ENCODE measurements at regions of chr17 and their contacts with region 1.

Region 1: GRCh38 chr17:50169121-50169764 is 3.4 kb downstream of the SGCA start:
- DNase-seq: peak; percentile 59 to 85
- ATAC-seq: peak; percentile 49 to 77
- H3K4me3 ChIP-seq: no peak overlapping the region
- H3K27ac ChIP-seq: peak overlapping the region; percentile 41 to 55; a peak in 5 of 6 replicates
- H3K4me1 ChIP-seq: peaks cover 25% of the 10 kb centered on the region
- CTCF ChIP-seq: peak; percentile 97
- EP300 ChIP-seq: no peak
- POLR2A ChIP-seq: no peak
- RAD21 ChIP-seq: peak; percentile 98 to 99

Region 2: GRCh38 chr17:49987681-49988441 is 181.4 kb before region 1 on chr17:
- CTCF ChIA-PET with region 1: no interaction called
- POLR2A ChIA-PET with region 1: no interaction called
- DNase-seq: peak in 1 of 2 experiments; percentile 59
- ATAC-seq: peak; percentile 52 to 81; a peak in 5 of 6 replicates
- H3K4me3 ChIP-seq: no peak overlapping the region
- H3K27ac ChIP-seq: peak overlapping the region in 1 of 2 experiments; percentile 41; a peak in 2 of 6 replicates
- H3K4me1 ChIP-seq: peaks cover 12% of the 10 kb centered on the region
- CTCF ChIP-seq: no peak
- EP300 ChIP-seq: no peak
- POLR2A ChIP-seq: no peak
- RAD21 ChIP-seq: no peak

Region 3: DNA sequence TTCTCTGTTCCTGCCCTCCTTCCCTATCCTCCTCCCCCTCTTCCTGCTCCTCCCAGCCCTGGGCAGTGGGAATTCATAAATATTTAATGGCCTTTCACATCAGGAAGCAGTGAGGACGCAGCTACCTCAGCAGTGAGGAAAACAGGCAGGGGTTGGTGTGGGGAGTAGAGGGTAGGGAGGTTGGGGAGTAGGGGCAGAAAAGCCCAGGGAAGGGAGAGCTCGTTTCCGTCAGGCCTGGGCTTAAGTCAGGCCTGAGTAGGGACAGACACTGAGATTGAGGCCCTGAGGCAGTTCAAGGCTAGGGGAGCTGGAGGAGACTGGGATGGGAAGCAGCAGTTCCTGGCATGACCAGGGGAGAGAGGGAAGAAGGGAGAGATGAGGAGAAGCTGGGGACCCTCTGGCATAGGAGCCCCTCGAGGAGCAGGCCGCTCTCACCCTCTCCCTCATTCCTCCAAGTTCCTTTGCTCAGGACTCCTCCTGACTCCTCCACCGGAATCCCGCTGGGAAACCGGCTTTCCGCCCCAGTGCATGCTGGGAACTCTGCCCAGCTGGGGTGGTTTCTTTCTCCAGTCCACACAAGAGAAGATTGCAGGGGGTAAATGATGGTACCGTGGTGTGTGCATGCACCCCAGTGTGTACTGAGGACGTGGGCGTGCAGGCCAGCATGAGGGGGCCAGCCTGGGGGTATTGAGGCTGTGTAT is 45.4 kb before region 1 on chr17:
- CTCF ChIA-PET with region 1: interaction called, 18 read pairs
- POLR2A ChIA-PET with region 1: no interaction called
- DNase-seq: no peak
- ATAC-seq: peak in 1 of 2 experiments; percentile 27; a peak in 3 of 6 replicates
- H3K4me3 ChIP-seq: no peak overlapping the region
- H3K27ac ChIP-seq: peak overlapping the region in 1 of 2 experiments; percentile 17; a peak in 1 of 6 replicates
- H3K4me1 ChIP-seq: peaks cover 10% of the 10 kb centered on the region; the same call in 1 of the 3 replicates
- CTCF ChIP-seq: no peak
- EP300 ChIP-seq: no peak
- POLR2A ChIP-seq: no peak
- RAD21 ChIP-seq: no peak

Region 4: GRCh38 chr17:50213026-50214022 is 44.1 kb after region 1 on chr17:
- CTCF ChIA-PET with region 1: interaction called, 14 read pairs
- POLR2A ChIA-PET with region 1: no interaction called
- DNase-seq: peak in 1 of 2 experiments; percentile 37
- ATAC-seq: peak; percentile 15 to 49; a peak in 3 of 6 replicates
- H3K4me3 ChIP-seq: no peak overlapping the region
- H3K27ac ChIP-seq: peak overlapping the region in 1 of 2 experiments; percentile 22; a peak in 1 of 6 replicates
- H3K4me1 ChIP-seq: peaks cover 39% of the 10 kb centered on the region
- CTCF ChIP-seq: peak; percentile 14; the same call in 1 of the 3 replicates
- EP300 ChIP-seq: no peak
- POLR2A ChIP-seq: no peak
- RAD21 ChIP-seq: no peak

Region 5: GRCh38 chr17:50283246-50283645 is 114.0 kb after region 1 on chr17:
- CTCF ChIA-PET with region 1: interaction called, 326 read pairs
- POLR2A ChIA-PET with region 1: no interaction called
- DNase-seq: no peak
- ATAC-seq: no peak
- H3K4me3 ChIP-seq: no peak overlapping the region
- H3K27ac ChIP-seq: no peak overlapping the region; a peak in 1 of 6 replicates
- H3K4me1 ChIP-seq: peaks cover 24% of the 10 kb centered on the region
- CTCF ChIP-seq: no peak
- EP300 ChIP-seq: no peak
- POLR2A ChIP-seq: no peak
- RAD21 ChIP-seq: no peak

Measured in A549 (cell line).